Aorta (tissue), 5 donors: ENCODE measurements at regions of chr3 and their contacts with region 1.

Region 1: GRCh38 chr3:61561374-61562041 is at the start of gene PTPRG:
- DNase-seq: peak; percentile 91 to 95
- ATAC-seq: peak; percentile 88
- H3K4me3 ChIP-seq: peak within 1 kb of the TSS; percentile 97 to 99
- H3K27ac ChIP-seq: peak within 1 kb of the TSS; percentile 78 to 89
- H3K4me1 ChIP-seq: no peaks in the 10 kb centered on the region
- H3K27me3 ChIP-seq: no peaks in the 10 kb centered on the region
- total RNA-seq, gene PTPRG: 85.0 to 150 TPM

Region 2: DNA sequence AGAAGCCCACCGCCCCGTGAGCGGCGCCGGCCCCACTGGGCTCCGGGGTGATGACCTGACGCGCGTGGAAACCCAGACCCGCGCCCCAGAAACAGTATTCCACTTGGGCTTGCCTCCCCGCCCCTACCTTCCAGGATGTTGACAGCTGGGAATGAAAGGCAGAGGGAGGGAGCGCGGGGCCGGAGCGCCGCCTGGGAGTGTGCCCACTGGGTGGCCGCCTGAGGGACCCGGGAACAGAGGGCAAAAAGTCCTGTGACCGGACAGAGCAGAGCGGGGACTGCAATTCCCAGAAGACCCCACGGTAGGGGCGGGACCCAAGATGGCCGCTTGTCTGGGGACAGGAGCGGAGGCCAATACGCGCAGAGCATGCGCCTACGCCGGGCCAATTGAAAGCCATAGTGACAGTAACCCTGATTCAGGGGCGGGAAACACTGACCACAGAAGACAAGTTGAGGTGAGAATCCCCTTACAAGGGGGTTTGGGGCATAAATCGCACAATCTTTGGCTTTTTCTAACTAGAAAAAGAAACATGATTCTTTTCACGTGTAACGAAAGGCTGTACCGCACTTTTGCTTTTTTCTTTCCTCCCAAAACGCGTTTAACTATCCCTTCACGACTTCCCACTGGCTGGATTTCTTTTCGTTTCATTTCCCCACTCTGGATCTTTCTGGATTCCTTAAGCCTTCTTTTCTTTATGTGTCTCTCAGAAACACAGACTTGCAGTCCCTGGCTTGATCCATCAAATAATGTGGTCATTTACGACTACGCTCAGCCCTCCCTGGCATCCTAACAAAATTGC is 310.1 kb before region 1 on chr3 and contains the start of gene FHIT:
- intact Hi-C with region 1: loop called in 1 of 2 experiments (anchors 5 kb)
- DNase-seq: peak; percentile 97 to 98
- ATAC-seq: peak; percentile 99
- H3K4me3 ChIP-seq: peak within 1 kb of the TSS; percentile 74 to 86
- H3K27ac ChIP-seq: no peak within 1 kb of the TSS
- H3K4me1 ChIP-seq: no peaks in the 10 kb centered on the region
- H3K27me3 ChIP-seq: no peaks in the 10 kb centered on the region
- total RNA-seq, gene FHIT: 4.9 to 9.2 TPM

Region 3: GRCh38 chr3:61493339-61493738 is 68.2 kb before region 1 on chr3:
- intact Hi-C with region 1: no loop called
- DNase-seq: no peak
- ATAC-seq: no peak
- H3K4me3 ChIP-seq: no peak overlapping the region
- H3K27ac ChIP-seq: no peak overlapping the region
- H3K4me1 ChIP-seq: no peaks in the 10 kb centered on the region
- H3K27me3 ChIP-seq: no peaks in the 10 kb centered on the region

Region 4: DNA sequence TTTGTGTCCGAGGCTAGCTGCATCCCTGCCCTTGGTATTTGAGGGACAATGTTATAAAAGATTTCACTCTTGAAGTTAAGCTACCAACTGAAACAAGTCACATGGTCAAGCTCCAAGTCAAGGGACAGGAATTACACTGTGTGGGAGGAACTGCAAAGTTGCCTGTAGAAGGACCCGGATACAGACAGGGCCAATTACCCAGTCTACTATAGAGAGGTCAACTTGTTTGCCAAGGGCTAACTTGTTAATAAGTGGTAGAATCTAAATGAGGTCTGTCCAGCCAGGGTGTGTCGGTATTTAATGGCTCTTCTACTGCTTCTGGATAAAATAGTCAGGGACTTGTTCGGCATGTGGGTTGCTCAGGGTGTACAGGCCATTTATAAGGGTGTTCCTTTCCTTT is 55.5 kb after region 1 on chr3:
- intact Hi-C with region 1: no loop called
- DNase-seq: no peak
- ATAC-seq: peak; percentile 56
- H3K4me3 ChIP-seq: no peak overlapping the region
- H3K27ac ChIP-seq: no peak overlapping the region
- H3K4me1 ChIP-seq: peaks cover 1 to 3% of the 10 kb centered on the region in 2 donors
- H3K27me3 ChIP-seq: no peaks in the 10 kb centered on the region

Region 5: DNA sequence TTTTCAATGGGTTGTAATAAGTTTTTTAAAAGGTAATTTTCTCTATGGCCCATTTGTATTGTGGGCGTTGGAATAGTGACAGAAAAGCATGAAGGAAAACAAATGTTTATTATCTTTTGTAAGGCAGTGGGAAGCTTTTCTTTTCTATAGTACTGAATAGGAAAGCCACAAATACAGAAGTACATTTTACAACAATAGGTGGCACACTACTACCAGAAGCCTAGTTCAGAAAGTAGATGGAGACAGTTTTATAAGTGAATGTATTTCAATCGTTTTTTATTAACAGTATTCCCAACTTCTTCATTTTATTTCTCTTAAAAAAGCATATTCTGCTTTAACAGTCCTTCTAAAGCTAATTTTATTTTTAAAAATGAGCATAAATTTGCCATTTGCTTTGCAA is 296.5 kb after region 1 on chr3:
- intact Hi-C with region 1: loop called in 1 of 2 experiments (anchors 5 kb)
- DNase-seq: no peak
- ATAC-seq: no peak
- H3K4me3 ChIP-seq: no peak overlapping the region
- H3K27ac ChIP-seq: no peak overlapping the region
- H3K4me1 ChIP-seq: peaks cover 8 to 10% of the 10 kb centered on the region in 2 donors
- H3K27me3 ChIP-seq: no peaks in the 10 kb centered on the region

Region 6: DNA sequence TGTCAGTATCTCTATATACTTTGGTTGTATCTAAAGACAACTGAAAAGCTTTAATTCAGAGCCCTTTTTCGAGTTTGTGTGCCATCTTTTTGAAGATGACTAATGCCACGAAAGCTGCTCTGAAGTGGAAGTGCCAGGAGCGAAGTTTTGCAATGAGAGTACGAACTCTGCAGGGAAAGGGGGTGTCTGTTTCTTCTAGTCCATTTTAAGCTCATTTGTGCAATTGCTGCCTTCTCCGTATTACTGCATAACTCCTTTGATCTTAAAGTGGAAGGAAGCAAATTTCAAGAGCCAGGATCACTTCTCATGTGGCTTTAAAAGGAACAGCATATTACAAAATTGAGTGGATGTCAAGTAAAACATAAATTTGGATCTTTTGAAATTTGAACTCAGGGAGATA is 566.5 kb after region 1 on chr3:
- intact Hi-C with region 1: loop called in 1 of 2 experiments (anchors 10 kb)
- DNase-seq: no peak
- ATAC-seq: no peak
- H3K4me3 ChIP-seq: no peak overlapping the region
- H3K27ac ChIP-seq: no peak overlapping the region
- H3K4me1 ChIP-seq: peaks cover 0 to 11% of the 10 kb centered on the region in 2 donors
- H3K27me3 ChIP-seq: no peaks in the 10 kb centered on the region

Region 7: GRCh38 chr3:62188681-62189383 is 627.3 kb after region 1 on chr3:
- intact Hi-C with region 1: loop called (anchors 2 to 5 kb)
- DNase-seq: peak; percentile 74 to 91
- ATAC-seq: peak; percentile 84
- H3K4me3 ChIP-seq: no peak overlapping the region
- H3K27ac ChIP-seq: no peak overlapping the region
- H3K4me1 ChIP-seq: no peaks in the 10 kb centered on the region
- H3K27me3 ChIP-seq: no peaks in the 10 kb centered on the region